Dorsolateral prefrontal cortex (tissue), 120 donors: ENCODE measurements at regions of chr9 and their contacts with region 1.

Region 1: DNA sequence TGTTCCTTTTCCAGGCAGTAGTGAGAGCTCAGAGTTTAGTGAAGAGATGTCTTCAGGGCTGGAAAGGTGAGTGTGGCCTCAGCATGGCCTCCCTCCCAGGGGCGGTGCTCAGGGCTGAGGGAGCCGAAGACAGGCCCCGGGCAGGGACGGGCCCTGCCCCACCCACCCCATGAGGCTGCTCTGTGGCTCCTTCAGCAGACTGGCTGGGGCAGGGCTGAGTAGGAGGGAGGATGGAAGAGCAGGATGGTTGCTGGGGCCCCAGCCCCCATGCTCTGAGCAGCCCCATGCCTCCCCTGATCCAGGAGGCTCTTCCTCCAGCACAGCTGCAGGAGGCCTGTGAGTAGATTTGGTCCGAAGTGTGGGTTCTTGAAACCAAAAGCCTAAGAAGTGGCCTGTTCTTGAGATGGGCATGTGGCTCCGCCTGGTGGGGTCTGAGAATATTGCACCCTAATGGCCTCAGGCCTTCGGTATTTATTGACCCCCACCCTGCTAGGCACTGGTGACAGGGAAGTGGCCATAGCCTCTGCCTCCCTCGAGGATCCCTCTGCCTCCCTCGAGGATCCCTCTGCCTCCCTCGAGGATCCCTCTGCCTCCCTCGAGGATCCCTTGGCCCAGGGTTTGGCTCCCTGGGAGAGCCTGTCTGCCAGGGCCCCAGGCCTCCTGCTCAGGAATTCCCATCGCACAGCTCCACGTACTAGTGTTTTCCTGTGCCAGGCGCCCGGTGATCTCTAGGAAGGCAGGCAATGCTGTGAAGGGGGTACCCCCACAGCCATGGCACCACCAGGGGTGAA is 65.4 kb upstream of the GARNL3 start:
- DNase-seq: peak; percentile 64 to 90 (median 80)
- H3K4me3 ChIP-seq: no peak overlapping the region
- H3K27ac ChIP-seq: peak overlapping the region in 24 of 59 donors; percentile 2 to 77 (median 34)
- H3K27me3 ChIP-seq: no peaks in the 10 kb centered on the region
- CTCF ChIP-seq: peak; percentile 82 to 97 (median 93)

Region 2: GRCh38 chr9:126893079-126893478 is 306.1 kb before region 1 on chr9:
- intact Hi-C with region 1: loop called in 1 of 2 experiments (anchors 5 kb)
- DNase-seq: no peak
- H3K4me3 ChIP-seq: peak overlapping the region in 3 of 59 donors; percentile 19 to 30 (median 24)
- H3K27ac ChIP-seq: no peak overlapping the region
- H3K27me3 ChIP-seq: no peaks in the 10 kb centered on the region
- CTCF ChIP-seq: peak in 55 of 56 donors; percentile 18 to 72 (median 48)

Region 3: GRCh38 chr9:126939821-126940221 is 259.4 kb before region 1 on chr9:
- intact Hi-C with region 1: loop called (anchors 1 to 2 kb)
- DNase-seq: no peak
- H3K4me3 ChIP-seq: no peak overlapping the region
- H3K27ac ChIP-seq: peak overlapping the region in 3 of 59 donors; percentile 16 to 24 (median 18)
- H3K27me3 ChIP-seq: no peaks in the 10 kb centered on the region
- CTCF ChIP-seq: no peak

Region 4: DNA sequence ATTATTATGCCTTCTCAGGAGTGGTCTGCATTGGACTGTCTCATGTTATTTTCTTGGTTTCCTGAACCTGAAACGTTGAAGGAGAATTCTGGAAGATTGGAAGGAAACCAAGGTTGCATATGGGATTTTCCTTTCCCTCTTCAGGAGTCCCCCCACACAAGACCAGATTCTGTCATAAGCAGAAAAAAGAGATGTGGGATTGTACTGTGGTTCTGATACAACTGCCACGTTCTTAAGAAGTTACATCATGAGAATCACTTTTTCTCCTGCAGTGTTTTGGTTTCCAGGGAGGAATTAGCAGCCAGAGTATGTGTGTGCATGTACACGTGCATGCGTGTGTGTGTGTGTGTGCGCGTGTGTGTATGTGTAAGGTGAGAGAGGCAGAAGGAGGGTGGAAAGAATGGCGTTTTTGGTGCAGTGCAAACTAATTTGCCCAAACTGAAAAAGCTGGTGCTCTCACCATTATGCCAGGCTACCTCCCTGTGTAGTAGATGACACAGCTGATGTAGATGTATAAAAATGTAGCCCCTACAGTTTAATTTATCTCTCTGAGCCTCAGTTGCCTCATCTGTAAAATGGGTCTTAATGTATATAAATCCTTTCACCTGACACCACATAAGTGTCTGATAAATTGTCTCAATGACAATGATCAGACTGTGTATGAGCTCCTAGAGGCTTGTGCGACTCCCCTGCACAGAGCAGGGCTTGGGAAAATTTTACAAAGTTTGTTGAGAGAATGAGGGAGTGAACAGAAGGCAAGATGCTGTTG is 246.0 kb before region 1 on chr9:
- intact Hi-C with region 1: no loop called
- DNase-seq: no peak
- H3K4me3 ChIP-seq: no peak overlapping the region
- H3K27ac ChIP-seq: no peak overlapping the region
- H3K27me3 ChIP-seq: no peaks in the 10 kb centered on the region
- CTCF ChIP-seq: no peak

Region 5: DNA sequence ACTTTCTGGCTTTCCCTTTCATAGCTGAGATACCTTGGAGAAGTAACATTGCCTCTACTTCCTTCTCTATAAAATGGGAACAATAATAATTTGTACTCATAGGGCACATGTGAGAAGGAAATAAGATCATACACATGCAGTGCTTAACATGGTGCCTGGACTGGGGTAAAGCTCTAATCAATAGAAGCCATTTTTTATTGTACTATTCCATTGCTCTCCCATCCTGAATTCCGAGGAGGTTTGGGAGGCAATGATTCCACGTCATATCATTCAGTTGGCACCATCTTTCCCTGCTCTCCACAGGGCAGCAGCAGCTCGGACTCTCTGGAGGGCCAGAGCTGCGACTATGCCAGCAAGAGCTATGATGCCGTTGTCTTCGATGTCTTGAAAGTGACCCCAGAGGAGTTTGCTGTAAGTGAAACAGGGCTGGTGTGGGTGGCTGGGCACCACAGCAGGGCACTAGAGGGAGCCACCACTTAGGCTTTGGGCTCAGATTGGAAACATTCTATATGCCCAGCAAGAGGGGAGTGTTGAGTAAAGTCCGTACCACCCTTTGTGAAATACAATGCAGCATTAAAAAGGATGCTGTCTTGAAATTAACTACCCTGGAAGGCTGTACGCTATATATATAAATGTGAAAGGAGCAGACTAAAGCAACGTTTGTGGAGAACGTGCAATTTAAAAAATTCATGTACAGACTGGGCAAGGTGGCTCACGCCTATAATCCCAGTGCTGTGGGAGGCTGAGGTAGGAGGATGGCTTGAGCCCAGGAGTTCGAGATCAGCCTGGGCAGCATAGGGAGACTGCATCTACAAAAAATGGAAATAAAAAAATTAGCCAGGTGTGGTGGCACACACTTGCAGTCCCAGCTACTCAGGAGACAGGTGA is 233.4 kb before region 1 on chr9:
- intact Hi-C with region 1: loop called (anchors 1 to 5 kb)
- DNase-seq: peak; percentile 34 to 72 (median 62)
- H3K4me3 ChIP-seq: no peak overlapping the region
- H3K27ac ChIP-seq: peak overlapping the region in 9 of 59 donors; percentile 13 to 61 (median 36)
- H3K27me3 ChIP-seq: no peaks in the 10 kb centered on the region
- CTCF ChIP-seq: peak; percentile 31 to 89 (median 78)

Region 6: GRCh38 chr9:127096208-127096607 is 103.0 kb before region 1 on chr9:
- intact Hi-C with region 1: no loop called
- DNase-seq: peak in 7 of 10 donors; percentile 62 to 75 (median 65)
- H3K4me3 ChIP-seq: peak overlapping the region in 3 of 59 donors; percentile 10 to 23 (median 12)
- H3K27ac ChIP-seq: peak overlapping the region in 56 of 59 donors; percentile 8 to 87 (median 68)
- H3K27me3 ChIP-seq: no peaks in the 10 kb centered on the region
- CTCF ChIP-seq: no peak

Region 7: GRCh38 chr9:127163409-127163808 is 35.8 kb before region 1 on chr9:
- intact Hi-C with region 1: loop called in 1 of 2 experiments (anchors 5 kb)
- DNase-seq: peak in 3 of 10 donors; percentile 2 to 33 (median 25)
- H3K4me3 ChIP-seq: peak overlapping the region in 1 of 59 donors; percentile 4
- H3K27ac ChIP-seq: peak overlapping the region in 54 of 59 donors; percentile 0 to 91 (median 60)
- H3K27me3 ChIP-seq: no peaks in the 10 kb centered on the region
- CTCF ChIP-seq: no peak

Region 8: GRCh38 chr9:127450830-127451724 is 251.9 kb after region 1 on chr9 and contains the starts of genes LRSAM1 and RPL12:
- intact Hi-C with region 1: no loop called
- DNase-seq: peak; percentile 95 to 97 (median 96)
- H3K4me3 ChIP-seq: peak within 1 kb of the TSS; percentile 66 to 99 (median 92)
- H3K27ac ChIP-seq: peak within 1 kb of the TSS; percentile 26 to 98 (median 89)
- H3K27me3 ChIP-seq: no peaks in the 10 kb centered on the region
- CTCF ChIP-seq: peak in 16 of 56 donors; percentile 7 to 43 (median 20)
- total RNA-seq, gene LRSAM1: 29.7 to 62.3 (median 40.4) TPM
- total RNA-seq, gene RPL12: 136 to 384 (median 236) TPM